ENCODE measurements at regions of chr5 and their contacts with region 1.

Region 1: GRCh38 chr5:112551419-112552032 is 132.4 kb upstream of the EPB41L4A start:
- DNase-seq: peak; percentile 43
- CTCF ChIP-seq: peak; percentile 65

Region 2: DNA sequence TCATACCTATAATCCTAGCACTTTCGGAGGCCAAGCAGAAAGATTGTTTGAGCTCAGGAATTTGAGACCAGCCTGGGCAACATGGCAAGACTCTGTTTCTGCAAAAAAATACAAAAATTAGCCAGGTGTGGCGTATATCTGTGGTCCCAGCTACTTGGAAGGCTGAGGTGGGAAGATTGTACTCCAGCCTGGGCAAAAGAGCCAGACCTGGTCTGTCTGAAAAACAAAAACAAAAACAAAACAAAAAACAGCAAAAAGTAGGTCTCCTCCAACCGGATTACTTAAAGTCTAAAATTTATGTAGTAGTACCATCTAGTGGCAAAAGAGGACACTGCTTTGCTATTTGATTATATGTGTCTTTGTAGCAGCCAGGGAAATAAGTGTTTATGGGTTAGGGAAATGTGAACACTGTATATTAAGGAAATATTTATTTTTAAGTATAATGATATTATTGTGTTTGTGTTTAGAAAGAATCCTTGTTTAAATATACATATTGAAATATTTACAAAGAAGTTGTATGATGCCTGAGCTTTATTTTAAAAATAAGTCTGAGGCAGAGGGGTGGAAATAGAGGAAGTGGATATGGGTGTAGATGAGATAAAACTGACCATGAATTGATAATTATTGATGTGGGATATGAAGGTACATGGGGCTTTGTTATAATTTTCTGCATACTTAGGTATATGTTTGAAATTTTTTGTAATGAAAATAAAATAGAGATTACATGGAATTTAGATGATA is 206.1 kb after region 1 on chr5:
- in situ Hi-C with region 1: loop called (anchors 10 kb)
- DNase-seq: peak; percentile 30
- CTCF ChIP-seq: peak; percentile 60

Region 3: GRCh38 chr5:112800891-112801290 is 249.4 kb after region 1 on chr5:
- in situ Hi-C with region 1: no loop called
- DNase-seq: no peak
- CTCF ChIP-seq: no peak